Heart right ventricle (tissue), 16 donors: ENCODE measurements at regions of chr12 and their contacts with region 1.

Region 1: GRCh38 chr12:46473634-46474329 is 101.2 kb upstream of the SLC38A2 start:
- DNase-seq: peak; percentile 41 to 74
- ATAC-seq: peak; percentile 74 to 95 (median 92)
- H3K4me3 ChIP-seq: peak overlapping the region in 1 of 10 donors; percentile 3
- H3K27ac ChIP-seq: peak overlapping the region; percentile 37 to 91 (median 86)
- H3K4me1 ChIP-seq: peaks cover 7 to 46% (median 29%) of the 10 kb centered on the region in 9 donors
- H3K27me3 ChIP-seq: no peaks in the 10 kb centered on the region
- CTCF ChIP-seq: no peak

Region 2: GRCh38 chr12:46303039-46303666 is 170.6 kb before region 1 on chr12:
- intact Hi-C with region 1: no loop called
- DNase-seq: peak in 1 of 2 donors; percentile 21
- ATAC-seq: peak in 4 of 8 donors; percentile 59 to 65 (median 62)
- H3K4me3 ChIP-seq: no peak overlapping the region
- H3K27ac ChIP-seq: no peak overlapping the region
- H3K4me1 ChIP-seq: peaks cover 0 to 31% (median 20%) of the 10 kb centered on the region in 9 donors
- H3K27me3 ChIP-seq: no peaks in the 10 kb centered on the region
- CTCF ChIP-seq: peak; percentile 26 to 69 (median 61)

Region 3: GRCh38 chr12:46430340-46430948 is 43.3 kb before region 1 on chr12:
- intact Hi-C with region 1: no loop called
- DNase-seq: peak in 1 of 2 donors; percentile 16
- ATAC-seq: peak in 7 of 8 donors; percentile 54 to 86 (median 76)
- H3K4me3 ChIP-seq: no peak overlapping the region
- H3K27ac ChIP-seq: peak overlapping the region in 8 of 10 donors; percentile 49 to 83 (median 71)
- H3K4me1 ChIP-seq: peaks cover 0 to 34% (median 28%) of the 10 kb centered on the region in 9 donors
- H3K27me3 ChIP-seq: no peaks in the 10 kb centered on the region
- CTCF ChIP-seq: no peak

Region 4: GRCh38 chr12:46490635-46491034 is 16.9 kb after region 1 on chr12:
- intact Hi-C with region 1: loop called in 1 of 10 experiments (anchors 2 kb)
- DNase-seq: no peak
- ATAC-seq: peak in 1 of 8 donors; percentile 41
- H3K4me3 ChIP-seq: no peak overlapping the region
- H3K27ac ChIP-seq: peak overlapping the region in 7 of 10 donors; percentile 41 to 75 (median 64)
- H3K4me1 ChIP-seq: peaks cover 4 to 63% (median 37%) of the 10 kb centered on the region in 9 donors
- H3K27me3 ChIP-seq: no peaks in the 10 kb centered on the region
- CTCF ChIP-seq: no peak

Region 5: GRCh38 chr12:46523863-46524770 is 50.3 kb after region 1 on chr12:
- intact Hi-C with region 1: loop called in 4 of 10 experiments (anchors 2 to 10 kb)
- DNase-seq: no peak
- ATAC-seq: peak in 2 of 8 donors; percentile 14 to 15
- H3K4me3 ChIP-seq: no peak overlapping the region
- H3K27ac ChIP-seq: peak overlapping the region; percentile 6 to 85 (median 76)
- H3K4me1 ChIP-seq: peaks cover 10 to 52% (median 39%) of the 10 kb centered on the region in 9 donors
- H3K27me3 ChIP-seq: no peaks in the 10 kb centered on the region
- CTCF ChIP-seq: no peak